Upper lobe of right lung (tissue), 1 donor: ENCODE measurements at regions of chr6 and their contacts with region 1.

Region 1: DNA sequence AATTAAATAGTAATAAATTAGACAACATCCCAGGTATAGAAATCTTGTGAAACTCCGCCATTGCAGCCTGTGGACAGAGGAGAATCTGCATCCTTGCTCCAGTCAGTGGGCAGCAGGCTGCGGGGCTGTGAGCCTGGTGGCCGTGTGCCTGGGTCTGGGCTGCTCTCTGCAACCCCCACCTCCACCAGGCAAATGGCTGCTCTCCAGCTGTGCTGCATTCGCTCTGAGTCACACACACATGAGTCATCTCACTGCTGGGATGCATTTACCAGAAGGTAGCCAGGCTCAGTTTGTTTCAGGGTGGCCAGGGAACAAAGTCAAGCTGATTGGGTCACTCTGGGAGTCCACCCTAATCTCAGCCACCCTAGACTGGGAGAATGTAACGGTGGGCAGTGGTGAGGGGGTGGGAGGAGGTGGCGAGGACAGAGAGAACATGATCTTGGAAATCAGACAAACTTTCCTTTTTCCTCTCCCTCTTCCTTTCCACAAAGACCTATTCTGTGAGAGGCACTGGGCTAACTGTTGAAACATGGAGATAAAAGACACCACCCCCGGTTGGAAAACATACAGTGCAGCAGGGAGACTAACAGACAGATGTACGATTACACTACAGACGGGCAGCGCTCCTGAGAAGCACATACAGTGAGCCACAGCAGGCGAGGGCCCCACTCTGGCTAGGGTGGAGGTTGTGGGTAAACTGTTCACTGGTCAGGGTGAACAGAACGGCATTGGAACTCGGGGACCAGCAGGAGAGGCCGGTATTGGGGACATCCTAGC is 59.2 kb downstream of the TRAM2 start:
- DNase-seq: no peak
- ATAC-seq: peak; percentile 81
- H3K4me3 ChIP-seq: no peak overlapping the region
- H3K27ac ChIP-seq: peak overlapping the region; percentile 78
- H3K4me1 ChIP-seq: peaks cover 54% of the 10 kb centered on the region
- H3K27me3 ChIP-seq: no peaks in the 10 kb centered on the region
- CTCF ChIP-seq: no peak

Region 2: DNA sequence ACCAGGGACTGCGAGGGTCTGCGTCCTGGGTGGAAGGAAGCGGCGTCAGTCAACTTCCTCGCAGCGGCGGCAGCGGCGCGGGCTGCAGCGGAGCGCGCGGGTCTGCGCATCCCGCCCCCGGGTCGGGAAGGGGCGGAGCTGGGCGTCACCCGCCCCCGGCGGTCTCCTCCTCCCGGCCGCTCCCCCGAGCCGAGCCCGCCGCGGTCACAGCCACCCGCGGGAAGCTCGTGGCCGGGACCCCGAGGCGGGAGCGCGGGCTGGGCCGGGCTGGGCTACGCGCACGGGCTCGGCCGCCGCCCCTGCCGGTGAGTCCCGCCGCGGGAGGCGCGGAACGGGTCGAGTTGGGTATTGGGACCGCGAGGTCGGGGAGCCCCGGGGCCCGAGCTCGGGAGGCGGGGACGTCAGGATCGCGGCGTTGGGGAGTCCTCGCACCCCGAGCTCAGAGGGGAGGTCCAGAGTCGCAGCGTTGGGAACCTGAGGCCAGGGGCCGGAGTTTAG is 155.7 kb before region 1 on chr6 and contains the start of gene PAQR8:
- intact Hi-C with region 1: no loop called
- DNase-seq: peak; percentile 88
- ATAC-seq: peak; percentile 97
- H3K4me3 ChIP-seq: peak within 1 kb of the TSS; percentile 82
- H3K27ac ChIP-seq: peak within 1 kb of the TSS; percentile 78
- H3K4me1 ChIP-seq: peaks cover 16% of the 10 kb centered on the region
- H3K27me3 ChIP-seq: no peaks in the 10 kb centered on the region
- CTCF ChIP-seq: no peak
- total RNA-seq, gene PAQR8: 5.8 TPM

Region 3: DNA sequence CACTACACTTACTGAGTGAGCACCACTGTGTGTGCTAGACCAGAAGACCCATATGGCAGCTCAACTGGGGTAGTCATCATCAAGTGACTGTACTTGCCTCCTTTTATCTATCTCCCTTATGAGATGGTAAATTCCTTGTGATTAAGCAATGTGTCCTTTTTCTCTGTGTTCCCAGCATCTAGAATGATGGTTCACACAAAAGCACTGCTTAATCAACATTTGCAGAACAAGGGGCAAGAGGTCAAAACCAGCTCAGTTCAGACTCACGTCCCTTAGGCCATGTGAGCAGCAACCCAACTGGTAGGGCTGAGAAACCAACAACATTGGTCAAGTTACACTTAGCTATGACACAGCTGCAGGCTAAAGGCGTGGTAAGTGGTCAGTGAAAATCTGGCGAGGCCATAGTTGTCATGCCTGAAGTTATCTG is 49.2 kb after region 1 on chr6:
- intact Hi-C with region 1: loop called (anchors 10 kb)
- DNase-seq: no peak
- ATAC-seq: peak; percentile 38
- H3K4me3 ChIP-seq: no peak overlapping the region
- H3K27ac ChIP-seq: peak overlapping the region; percentile 30
- H3K4me1 ChIP-seq: peaks cover 43% of the 10 kb centered on the region
- H3K27me3 ChIP-seq: no peaks in the 10 kb centered on the region
- CTCF ChIP-seq: no peak